ENCODE measurements at regions of chr1 and their contacts with region 1.

Region 1: DNA sequence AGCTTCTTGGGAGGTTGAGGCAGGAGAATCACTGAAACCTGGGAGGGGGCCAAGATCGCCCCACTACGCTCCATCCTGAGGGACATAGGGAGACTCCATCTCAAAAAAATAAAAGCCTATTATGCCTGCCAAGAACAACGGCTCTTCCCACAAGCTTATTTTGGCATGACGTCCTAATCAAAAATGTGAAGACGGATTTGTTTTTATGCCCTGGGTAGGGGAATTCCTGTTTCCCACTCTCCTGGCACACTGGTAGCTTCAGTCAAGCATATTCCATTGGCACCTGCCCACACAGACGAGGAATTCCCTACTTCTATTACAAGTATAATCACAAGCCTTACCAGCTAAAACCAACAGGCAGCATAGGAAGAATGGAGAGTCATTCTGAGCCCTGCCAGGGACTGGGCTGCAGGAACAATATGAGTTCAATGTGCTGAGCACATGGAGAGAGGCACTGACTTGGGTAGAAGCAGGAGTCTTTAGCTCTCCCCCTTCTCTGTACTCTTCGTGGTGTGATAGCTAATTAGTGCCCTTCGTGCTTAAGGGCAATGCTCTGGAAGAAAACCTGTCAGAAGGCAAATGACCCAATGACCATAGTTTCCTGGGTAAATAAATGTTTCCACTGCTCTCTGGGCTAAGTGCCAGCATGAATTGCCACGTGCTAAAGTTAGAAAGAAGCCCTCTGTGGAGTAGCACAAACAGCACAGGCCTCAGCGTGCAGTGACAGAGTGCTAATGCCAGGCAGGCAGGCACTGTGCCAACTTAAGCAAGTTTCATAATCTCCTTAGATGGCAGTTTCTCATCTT is 16.8 kb downstream of the TNFSF4 start:
- DNase-seq: peak; percentile 35 to 92
- H3K4me3 ChIP-seq: peak overlapping the region in 1 of 2 donors; percentile 28
- H3K27ac ChIP-seq: peak overlapping the region; percentile 73 to 77
- H3K4me1 ChIP-seq: peaks cover 5 to 11% of the 10 kb centered on the region in 2 donors
- H3K27me3 ChIP-seq: no peaks in the 10 kb centered on the region
- CTCF ChIP-seq: no peak

Region 2: GRCh38 chr1:172917972-172918371 is 272.3 kb before region 1 on chr1:
- intact Hi-C with region 1: loop called (anchors 5 kb)
- DNase-seq: peak in 1 of 2 donors; percentile 66
- H3K4me3 ChIP-seq: no peak overlapping the region
- H3K27ac ChIP-seq: peak overlapping the region in 1 of 2 donors; percentile 43
- H3K4me1 ChIP-seq: peaks cover 0 to 15% of the 10 kb centered on the region in 2 donors
- H3K27me3 ChIP-seq: no peaks in the 10 kb centered on the region
- CTCF ChIP-seq: no peak

Region 3: GRCh38 chr1:172976222-172977041 is 213.9 kb before region 1 on chr1:
- intact Hi-C with region 1: loop called (anchors 10 kb)
- DNase-seq: no peak
- H3K4me3 ChIP-seq: no peak overlapping the region
- H3K27ac ChIP-seq: no peak overlapping the region
- H3K4me1 ChIP-seq: peaks cover 0 to 7% of the 10 kb centered on the region in 2 donors
- H3K27me3 ChIP-seq: no peaks in the 10 kb centered on the region
- CTCF ChIP-seq: no peak